ENCODE measurements at regions of chr12 and their contacts with region 1.

Region 1: DNA sequence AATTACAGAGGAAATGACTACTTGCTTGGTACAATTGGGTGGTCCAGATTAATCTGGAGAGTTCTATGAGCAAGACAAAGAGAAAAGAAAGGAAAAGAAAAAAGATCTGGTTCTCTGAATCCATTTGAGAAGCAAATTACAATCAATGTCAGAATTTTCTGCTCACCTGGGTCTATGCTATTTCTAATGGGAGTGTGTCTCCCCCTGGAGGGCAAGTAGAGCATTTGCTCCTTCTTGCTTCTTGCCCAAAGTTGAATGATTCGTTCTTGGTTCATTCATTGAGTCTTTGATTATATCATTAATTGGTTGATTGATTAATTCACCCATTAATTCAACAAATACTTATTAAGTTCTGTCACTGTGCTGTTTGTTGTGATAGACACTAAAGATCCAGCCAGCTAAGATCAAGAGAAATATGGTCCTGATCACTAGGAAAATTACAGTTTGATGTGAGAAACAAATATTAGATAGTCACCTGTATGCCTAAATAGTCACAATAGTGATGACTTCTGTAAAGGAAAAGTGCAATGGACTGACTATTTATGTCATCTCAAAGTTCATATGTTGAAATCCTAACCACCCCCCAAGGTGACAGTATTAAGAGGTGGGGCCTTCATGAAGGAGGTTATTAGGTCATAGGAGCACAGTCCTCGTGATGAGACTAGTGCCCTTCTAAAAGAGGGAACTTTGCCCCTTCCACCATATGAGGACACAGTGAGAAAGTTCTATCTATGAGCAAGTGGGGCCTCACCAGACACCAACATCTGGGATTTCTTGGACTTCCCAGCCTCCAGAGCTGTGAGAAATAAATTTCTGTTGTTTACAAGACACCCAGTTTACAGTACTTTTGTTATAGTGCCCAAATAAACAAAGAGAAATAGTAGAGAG is 8.0 kb upstream of the ASB8 start:
- DNase-seq: no peak
- H3K4me3 ChIP-seq: no peak overlapping the region
- H3K27me3 ChIP-seq: peaks cover 5% of the 10 kb centered on the region; the same call in 1 of the 2 replicates
- CTCF ChIP-seq: peak; percentile 94

Region 2: GRCh38 chr12:48084066-48084465 is 81.3 kb before region 1 on chr12:
- CTCF ChIA-PET with region 1: interaction called, 12 read pairs
- POLR2A ChIA-PET with region 1: no interaction called
- DNase-seq: no peak
- H3K4me3 ChIP-seq: no peak overlapping the region
- H3K27me3 ChIP-seq: no peaks in the 10 kb centered on the region
- CTCF ChIP-seq: peak; percentile 37

Region 3: GRCh38 chr12:48472259-48472658 is 306.9 kb after region 1 on chr12 and contains the start of gene ANP32D:
- CTCF ChIA-PET with region 1: no interaction called
- POLR2A ChIA-PET with region 1: no interaction called
- DNase-seq: no peak
- H3K4me3 ChIP-seq: no peak within 1 kb of the TSS
- H3K27me3 ChIP-seq: no peaks in the 10 kb centered on the region
- CTCF ChIP-seq: no peak
- polyA plus RNA-seq, gene ANP32D: not detected in 2 replicates